OCI-LY7 (cell line): ENCODE measurements at regions of chr4 and their contacts with region 1.

Region 1: GRCh38 chr4:88523325-88524129 is at the start of gene PYURF:
- DNase-seq: peak; percentile 80
- H3K4me3 ChIP-seq: peak within 1 kb of the TSS; percentile 78
- H3K27ac ChIP-seq: no peak within 1 kb of the TSS
- H3K4me1 ChIP-seq: no peaks in the 10 kb centered on the region
- CTCF ChIP-seq: no peak
- total RNA-seq, gene PYURF: 22.9 and 25.0 TPM in 2 replicates

Region 2: DNA sequence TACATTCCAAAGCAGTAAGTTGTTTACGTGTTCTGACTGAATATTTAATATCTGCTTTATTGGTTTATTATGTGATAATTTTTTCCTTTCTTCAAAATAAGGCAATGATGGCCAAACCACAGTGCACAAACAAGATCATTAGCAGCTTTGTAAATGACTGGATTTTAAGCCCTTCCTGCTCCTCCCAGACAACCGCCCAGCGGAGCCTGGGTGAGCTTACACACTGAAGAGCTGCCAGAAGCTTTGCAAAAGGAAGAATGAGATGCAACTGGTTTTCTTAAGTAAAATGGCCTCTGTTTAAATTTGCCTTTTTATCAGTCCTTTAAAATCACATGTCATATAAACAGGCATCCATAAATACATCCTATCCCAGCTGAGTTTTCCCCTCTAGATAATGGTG is 1046.6 kb before region 1 on chr4:
- CTCF ChIA-PET with region 1: no interaction called
- POLR2A ChIA-PET with region 1: no interaction called
- intact Hi-C with region 1: no loop called
- DNase-seq: no peak
- H3K4me3 ChIP-seq: no peak overlapping the region
- H3K27ac ChIP-seq: no peak overlapping the region
- H3K4me1 ChIP-seq: no peaks in the 10 kb centered on the region
- CTCF ChIP-seq: no peak

Region 3: DNA sequence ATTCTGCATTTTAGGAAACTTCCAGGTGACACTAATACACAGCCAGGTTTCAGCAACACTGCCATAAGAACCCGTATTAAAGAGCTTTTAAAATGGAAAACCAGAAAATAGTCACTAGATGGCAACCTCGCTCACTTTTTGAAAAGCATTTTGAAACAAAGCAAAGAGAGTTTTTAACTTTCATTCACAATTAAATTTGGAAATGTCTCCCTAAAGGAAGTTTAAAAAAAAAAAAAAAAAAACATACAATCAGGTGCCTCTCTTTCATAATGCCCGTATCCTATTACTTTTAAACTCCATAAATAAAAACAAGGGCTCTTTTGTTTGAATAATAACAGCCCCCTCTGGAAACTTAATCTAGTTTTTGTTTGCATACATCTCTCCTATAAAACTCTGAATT is 670.4 kb before region 1 on chr4:
- CTCF ChIA-PET with region 1: no interaction called
- POLR2A ChIA-PET with region 1: no interaction called
- intact Hi-C with region 1: loop called (anchors 5 kb)
- DNase-seq: peak; percentile 33
- H3K4me3 ChIP-seq: no peak overlapping the region
- H3K27ac ChIP-seq: no peak overlapping the region
- H3K4me1 ChIP-seq: no peaks in the 10 kb centered on the region
- CTCF ChIP-seq: peak; percentile 81

Region 4: GRCh38 chr4:88378691-88379559 is 144.6 kb before region 1 on chr4 and contains the start of gene HERC6:
- CTCF ChIA-PET with region 1: no interaction called
- POLR2A ChIA-PET with region 1: no interaction called
- intact Hi-C with region 1: loop called (anchors 5 kb)
- DNase-seq: peak; percentile 70
- H3K4me3 ChIP-seq: peak within 1 kb of the TSS; percentile 72
- H3K27ac ChIP-seq: no peak within 1 kb of the TSS
- H3K4me1 ChIP-seq: peaks cover 3% of the 10 kb centered on the region
- CTCF ChIP-seq: peak; percentile 66
- total RNA-seq, gene HERC6: 0.09 and 0.28 TPM in 2 replicates

Region 5: GRCh38 chr4:88659055-88659889 is 135.7 kb after region 1 on chr4:
- CTCF ChIA-PET with region 1: no interaction called
- POLR2A ChIA-PET with region 1: no interaction called
- intact Hi-C with region 1: loop called (anchors 1 kb)
- DNase-seq: peak; percentile 24
- H3K4me3 ChIP-seq: no peak overlapping the region
- H3K27ac ChIP-seq: no peak overlapping the region
- H3K4me1 ChIP-seq: no peaks in the 10 kb centered on the region
- CTCF ChIP-seq: peak; percentile 73

Region 6: DNA sequence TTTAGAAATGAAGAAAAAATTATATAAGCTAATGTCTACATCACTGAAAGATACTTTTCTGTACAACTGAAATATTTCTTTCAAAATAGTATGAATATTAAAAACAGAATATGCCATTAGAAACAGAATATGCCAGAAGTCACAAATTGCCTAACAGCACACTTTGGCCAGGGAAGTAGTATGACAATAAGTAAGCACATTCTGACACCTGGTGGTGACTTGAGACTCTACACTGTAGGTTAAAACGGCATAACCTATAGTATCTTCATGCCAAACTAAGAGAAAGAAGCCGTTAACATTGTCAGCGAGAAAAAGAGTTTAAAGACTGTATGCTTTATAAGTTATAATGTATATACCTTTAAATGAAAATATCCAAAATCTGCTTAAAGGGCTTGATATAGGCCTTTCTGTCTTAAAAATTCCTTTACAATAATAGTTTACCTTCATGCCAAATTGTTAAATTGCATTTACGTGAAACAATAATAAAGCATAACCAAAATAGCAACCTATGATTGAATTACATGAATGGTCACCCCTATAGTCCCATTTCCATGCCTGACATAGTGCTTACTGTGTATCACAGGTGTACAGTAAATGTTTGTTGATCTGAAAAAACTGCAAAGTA is 500.6 kb after region 1 on chr4:
- CTCF ChIA-PET with region 1: no interaction called
- POLR2A ChIA-PET with region 1: interaction called, 5 read pairs
- intact Hi-C with region 1: loop called (anchors 1 kb)
- DNase-seq: peak; percentile 72
- H3K4me3 ChIP-seq: no peak overlapping the region
- H3K27ac ChIP-seq: no peak overlapping the region
- H3K4me1 ChIP-seq: no peaks in the 10 kb centered on the region
- CTCF ChIP-seq: peak; percentile 92